Panc1 (cell line): ENCODE measurements at regions of chr2 and their contacts with region 1.

Region 1: DNA sequence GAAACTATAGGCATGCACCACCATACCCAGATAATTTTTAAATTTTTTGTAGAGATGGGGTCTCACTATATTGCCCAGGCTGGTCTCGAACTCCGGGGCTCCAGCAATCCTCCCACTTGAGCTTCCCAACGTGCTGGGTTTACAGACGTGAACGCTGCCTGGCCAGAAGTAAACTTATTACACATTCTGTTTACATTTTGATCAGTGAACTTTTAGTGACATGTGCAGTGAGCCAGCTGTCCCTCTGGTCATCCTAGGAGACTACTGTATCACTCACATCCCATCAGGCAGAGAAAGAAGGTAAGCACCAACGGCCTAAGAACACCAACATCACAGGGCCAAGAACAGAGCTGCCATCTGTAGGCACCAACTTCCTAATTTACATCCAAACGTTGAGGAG is 22.2 kb downstream of the NDUFA10 start:
- DNase-seq: no peak
- ATAC-seq: no peak
- H3K4me3 ChIP-seq: no peak overlapping the region
- H3K27ac ChIP-seq: no peak overlapping the region
- H3K4me1 ChIP-seq: no peaks in the 10 kb centered on the region
- H3K27me3 ChIP-seq: no peaks in the 10 kb centered on the region
- CTCF ChIP-seq: no peak

Region 2: GRCh38 chr2:240032406-240033329 is 29.7 kb after region 1 on chr2:
- CTCF ChIA-PET with region 1: no interaction called
- POLR2A ChIA-PET with region 1: no interaction called
- in situ Hi-C with region 1: no loop called
- intact Hi-C with region 1: no loop called
- DNase-seq: no peak
- ATAC-seq: peak; percentile 67
- H3K4me3 ChIP-seq: no peak overlapping the region; a peak in 1 of 4 replicates
- H3K27ac ChIP-seq: no peak overlapping the region
- H3K4me1 ChIP-seq: no peaks in the 10 kb centered on the region
- H3K27me3 ChIP-seq: peaks cover 18% of the 10 kb centered on the region
- CTCF ChIP-seq: no peak

Region 3: GRCh38 chr2:240074545-240074944 is 71.6 kb after region 1 on chr2:
- CTCF ChIA-PET with region 1: no interaction called
- POLR2A ChIA-PET with region 1: interaction called, 16 read pairs
- in situ Hi-C with region 1: no loop called
- intact Hi-C with region 1: no loop called
- DNase-seq: no peak
- ATAC-seq: no peak
- H3K4me3 ChIP-seq: no peak overlapping the region
- H3K27ac ChIP-seq: no peak overlapping the region
- H3K4me1 ChIP-seq: no peaks in the 10 kb centered on the region
- H3K27me3 ChIP-seq: no peaks in the 10 kb centered on the region
- CTCF ChIP-seq: no peak